ENCODE measurements at regions of chr4 and their contacts with region 1.

Region 1: GRCh38 chr4:112327965-112328733 is 31.0 kb downstream of the ALPK1 start:
- DNase-seq: peak in 1 of 2 experiments; percentile 17
- H3K4me3 ChIP-seq: no peak overlapping the region
- H3K4me3 Mint-ChIP-seq: no peak overlapping the region
- H3K27ac Mint-ChIP-seq: no peak overlapping the region
- H3K4me1 ChIP-seq: no peaks in the 10 kb centered on the region
- H3K4me1 Mint-ChIP-seq: no peaks in the 10 kb centered on the region
- H3K27me3 ChIP-seq: no peaks in the 10 kb centered on the region
- H3K27me3 Mint-ChIP-seq: no peaks in the 10 kb centered on the region
- CTCF ChIP-seq: peak; percentile 26 to 49

Region 2: DNA sequence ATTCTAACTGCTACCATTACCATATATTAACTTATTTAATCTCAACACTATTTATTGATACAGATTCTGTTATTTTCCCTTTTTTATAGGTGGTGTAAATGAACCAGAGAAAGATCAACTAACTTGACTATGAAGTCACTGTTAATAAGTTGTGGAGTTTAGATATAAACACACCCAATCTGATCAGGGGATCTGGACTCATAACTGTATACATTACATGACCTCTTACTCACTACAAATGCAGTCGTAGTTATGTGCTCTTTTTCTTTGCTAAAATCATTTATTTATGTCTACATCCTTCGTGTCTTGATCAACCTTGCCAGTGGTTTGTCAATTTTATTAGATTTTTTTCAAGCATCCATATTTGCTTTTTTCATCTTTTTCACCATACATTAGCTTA is 797.7 kb before region 1 on chr4:
- CTCF ChIA-PET with region 1: no interaction called
- POLR2A ChIA-PET with region 1: interaction called, 19 read pairs
- intact Hi-C with region 1: no loop called
- DNase-seq: no peak
- H3K4me3 ChIP-seq: no peak overlapping the region
- H3K4me3 Mint-ChIP-seq: no peak overlapping the region
- H3K27ac Mint-ChIP-seq: no peak overlapping the region
- H3K4me1 ChIP-seq: peaks cover 2% of the 10 kb centered on the region
- H3K4me1 Mint-ChIP-seq: no peaks in the 10 kb centered on the region
- H3K27me3 ChIP-seq: no peaks in the 10 kb centered on the region
- H3K27me3 Mint-ChIP-seq: no peaks in the 10 kb centered on the region
- CTCF ChIP-seq: no peak

Region 3: DNA sequence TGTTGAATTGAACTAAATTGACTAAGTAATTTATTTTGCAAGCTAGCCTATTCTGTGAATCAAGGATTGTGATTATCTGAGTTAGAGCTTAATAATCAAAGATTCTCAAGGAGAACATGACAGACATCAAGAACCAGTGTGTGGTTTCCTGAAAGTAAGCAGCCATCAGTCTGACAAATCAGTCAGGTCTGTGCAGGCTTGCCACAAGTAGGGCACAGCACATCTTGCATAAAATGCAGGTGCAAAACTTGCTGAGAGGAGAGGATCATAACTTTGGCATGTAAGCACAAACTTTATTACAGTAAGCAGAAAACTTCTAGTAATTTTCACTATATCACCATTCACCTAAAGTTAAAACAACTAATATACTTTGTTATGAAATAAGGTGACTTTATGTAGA is 160.4 kb before region 1 on chr4:
- CTCF ChIA-PET with region 1: no interaction called
- POLR2A ChIA-PET with region 1: no interaction called
- intact Hi-C with region 1: no loop called
- DNase-seq: no peak
- H3K4me3 ChIP-seq: no peak overlapping the region
- H3K4me3 Mint-ChIP-seq: no peak overlapping the region
- H3K27ac Mint-ChIP-seq: no peak overlapping the region
- H3K4me1 ChIP-seq: no peaks in the 10 kb centered on the region
- H3K4me1 Mint-ChIP-seq: no peaks in the 10 kb centered on the region
- H3K27me3 ChIP-seq: no peaks in the 10 kb centered on the region
- H3K27me3 Mint-ChIP-seq: no peaks in the 10 kb centered on the region
- CTCF ChIP-seq: no peak

Region 4: GRCh38 chr4:112604589-112604988 is 276.4 kb after region 1 on chr4:
- CTCF ChIA-PET with region 1: no interaction called
- POLR2A ChIA-PET with region 1: no interaction called
- intact Hi-C with region 1: loop called (anchors 1 kb)
- DNase-seq: peak in 1 of 2 experiments; percentile 61
- H3K4me3 ChIP-seq: no peak overlapping the region
- H3K4me3 Mint-ChIP-seq: no peak overlapping the region
- H3K27ac Mint-ChIP-seq: no peak overlapping the region
- H3K4me1 ChIP-seq: no peaks in the 10 kb centered on the region
- H3K4me1 Mint-ChIP-seq: no peaks in the 10 kb centered on the region
- H3K27me3 ChIP-seq: no peaks in the 10 kb centered on the region
- H3K27me3 Mint-ChIP-seq: no peaks in the 10 kb centered on the region
- CTCF ChIP-seq: peak; percentile 54 to 62

Region 5: DNA sequence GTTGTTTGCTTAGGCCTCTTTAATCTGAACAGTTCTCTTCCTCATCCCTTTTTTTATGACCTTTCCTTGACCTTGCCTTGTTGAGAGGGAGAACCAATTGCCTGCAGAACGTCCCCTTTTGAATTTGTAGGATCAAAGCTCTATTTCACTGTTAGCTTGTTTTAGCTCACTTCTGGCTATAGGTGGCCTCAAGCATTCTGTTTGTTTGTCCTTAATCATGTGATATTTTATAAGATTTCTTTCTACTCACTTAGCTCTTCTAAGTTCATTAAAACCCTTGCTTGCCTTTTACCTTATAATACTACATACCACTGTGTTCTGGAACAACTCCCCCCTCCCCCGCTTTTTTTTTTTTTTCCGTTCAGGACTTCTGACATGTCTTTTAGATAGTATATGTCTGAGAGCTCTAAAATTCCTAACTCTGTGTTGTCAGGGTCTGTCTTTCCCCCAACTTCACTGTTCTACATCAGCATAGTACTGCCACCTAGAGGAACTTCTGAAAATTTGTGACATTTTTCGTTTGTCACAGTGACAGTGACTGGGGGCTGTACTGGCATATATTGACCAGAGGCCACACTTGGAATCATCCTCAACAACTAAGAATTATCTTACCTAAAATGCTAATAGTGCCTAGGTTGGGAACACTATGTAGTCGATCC is 437.3 kb after region 1 on chr4:
- CTCF ChIA-PET with region 1: no interaction called
- POLR2A ChIA-PET with region 1: no interaction called
- intact Hi-C with region 1: loop called (anchors 5 kb)
- DNase-seq: peak in 1 of 2 experiments; percentile 33
- H3K4me3 ChIP-seq: no peak overlapping the region
- H3K4me3 Mint-ChIP-seq: no peak overlapping the region
- H3K27ac Mint-ChIP-seq: no peak overlapping the region
- H3K4me1 ChIP-seq: 0 out of 2 replicates have a peak, but pooled peaks cover 3% of the 10 kb centered on the region
- H3K4me1 Mint-ChIP-seq: peaks cover 10% of the 10 kb centered on the region
- H3K27me3 ChIP-seq: no peaks in the 10 kb centered on the region
- H3K27me3 Mint-ChIP-seq: no peaks in the 10 kb centered on the region
- CTCF ChIP-seq: peak; percentile 39 to 45

Region 6: GRCh38 chr4:113513382-113513781 is 1185.2 kb after region 1 on chr4:
- CTCF ChIA-PET with region 1: no interaction called
- POLR2A ChIA-PET with region 1: no interaction called
- intact Hi-C with region 1: no loop called
- DNase-seq: no peak
- H3K4me3 ChIP-seq: no peak overlapping the region
- H3K4me3 Mint-ChIP-seq: no peak overlapping the region
- H3K27ac Mint-ChIP-seq: no peak overlapping the region
- H3K4me1 ChIP-seq: no peaks in the 10 kb centered on the region
- H3K4me1 Mint-ChIP-seq: no peaks in the 10 kb centered on the region
- H3K27me3 ChIP-seq: no peaks in the 10 kb centered on the region
- H3K27me3 Mint-ChIP-seq: no peaks in the 10 kb centered on the region
- CTCF ChIP-seq: no peak

Measured in Caco-2 (cell line).